PC-3 (cell line): ENCODE measurements at regions of chr2 and their contacts with region 1.

Region 1: DNA sequence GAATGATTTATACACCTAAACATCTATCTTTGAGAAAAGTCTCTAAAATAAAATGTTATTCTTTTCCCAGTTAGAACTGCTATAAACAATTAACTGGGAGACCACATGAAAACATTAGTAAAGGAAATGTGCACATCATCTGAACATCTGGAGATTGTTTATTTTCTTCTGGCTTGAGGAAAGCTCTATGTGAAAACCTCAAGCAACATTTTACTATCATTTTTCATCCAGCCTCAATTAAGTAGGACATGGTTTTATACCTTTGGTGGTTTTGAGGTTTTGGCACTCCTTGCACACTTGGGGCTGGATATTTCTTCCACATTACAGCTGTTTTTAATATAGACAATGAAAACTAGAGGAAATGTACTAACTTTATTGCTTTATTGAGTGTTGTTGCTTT is 609.5 kb upstream of the SLC8A1 start:
- DNase-seq: no peak
- ATAC-seq: no peak
- H3K4me3 ChIP-seq: no peak overlapping the region
- H3K27ac ChIP-seq: no peak overlapping the region
- H3K4me1 ChIP-seq: peaks cover 5% of the 10 kb centered on the region
- H3K27me3 ChIP-seq: no peaks in the 10 kb centered on the region
- CTCF ChIP-seq: no peak

Region 2: GRCh38 chr2:40914666-40915065 is 146.7 kb before region 1 on chr2:
- CTCF ChIA-PET with region 1: no interaction called
- POLR2A ChIA-PET with region 1: no interaction called
- intact Hi-C with region 1: no loop called
- DNase-seq: no peak
- ATAC-seq: no peak
- H3K4me3 ChIP-seq: no peak overlapping the region
- H3K27ac ChIP-seq: no peak overlapping the region
- H3K4me1 ChIP-seq: no peaks in the 10 kb centered on the region
- H3K27me3 ChIP-seq: no peaks in the 10 kb centered on the region
- CTCF ChIP-seq: no peak

Region 3: GRCh38 chr2:41393621-41394020 is 332.3 kb after region 1 on chr2:
- CTCF ChIA-PET with region 1: no interaction called
- POLR2A ChIA-PET with region 1: no interaction called
- intact Hi-C with region 1: loop called (anchors 10 kb)
- DNase-seq: no peak
- ATAC-seq: no peak
- H3K4me3 ChIP-seq: no peak overlapping the region
- H3K27ac ChIP-seq: no peak overlapping the region
- H3K4me1 ChIP-seq: no peaks in the 10 kb centered on the region
- H3K27me3 ChIP-seq: no peaks in the 10 kb centered on the region
- CTCF ChIP-seq: no peak